Activated CD8-positive, alpha-beta T cell treated with anti-CD3 and anti-CD28 coated beads, Interleukin-2, amount 10 ng/mL, durations not matched to agents 7 days and 5 days (primary cell): ENCODE measurements at regions of chr4 and their contacts with region 1.

Region 1: GRCh38 chr4:87150498-87151261 is 69.7 kb downstream of the KLHL8 start:
- DNase-seq: peak; percentile 73
- ATAC-seq: peak; percentile 60
- H3K4me3 Mint-ChIP-seq: no peak overlapping the region
- H3K27ac Mint-ChIP-seq: no peak overlapping the region
- H3K4me1 Mint-ChIP-seq: no peaks in the 10 kb centered on the region
- H3K27me3 Mint-ChIP-seq: no peaks in the 10 kb centered on the region

Region 2: GRCh38 chr4:86927843-86928395 is 222.8 kb before region 1 on chr4:
- CTCF ChIA-PET with region 1: interaction called, 27 read pairs
- POLR2A ChIA-PET with region 1: no interaction called
- DNase-seq: no peak
- ATAC-seq: no peak
- H3K4me3 Mint-ChIP-seq: no peak overlapping the region
- H3K27ac Mint-ChIP-seq: no peak overlapping the region
- H3K4me1 Mint-ChIP-seq: peaks cover 3% of the 10 kb centered on the region
- H3K27me3 Mint-ChIP-seq: no peaks in the 10 kb centered on the region

Region 3: GRCh38 chr4:87166296-87166854 is 15.7 kb after region 1 on chr4:
- CTCF ChIA-PET with region 1: interaction called, 14 read pairs
- POLR2A ChIA-PET with region 1: no interaction called
- DNase-seq: no peak
- ATAC-seq: no peak
- H3K4me3 Mint-ChIP-seq: no peak overlapping the region
- H3K27ac Mint-ChIP-seq: no peak overlapping the region
- H3K4me1 Mint-ChIP-seq: no peaks in the 10 kb centered on the region
- H3K27me3 Mint-ChIP-seq: no peaks in the 10 kb centered on the region

Region 4: DNA sequence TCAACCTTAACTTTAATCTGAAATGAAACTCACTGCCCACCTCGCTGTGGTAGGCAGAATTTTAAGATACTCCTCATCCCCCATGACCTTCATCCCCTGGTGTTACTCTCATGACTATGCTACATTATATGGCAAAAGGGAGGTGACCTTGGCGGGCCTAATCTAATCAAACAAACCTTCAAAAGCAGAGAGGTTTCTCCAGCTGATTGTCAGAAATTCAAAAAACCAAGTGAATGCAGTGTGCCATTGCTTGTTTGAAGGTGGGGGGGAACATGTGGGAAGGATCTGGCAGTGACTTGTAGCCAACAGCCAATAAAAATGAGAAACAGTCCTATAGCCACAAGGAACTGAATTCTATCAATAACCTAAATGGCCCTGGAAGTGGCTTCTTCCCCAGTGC is 21.3 kb after region 1 on chr4:
- CTCF ChIA-PET with region 1: interaction called, 13 read pairs
- POLR2A ChIA-PET with region 1: no interaction called
- DNase-seq: no peak
- ATAC-seq: no peak
- H3K4me3 Mint-ChIP-seq: no peak overlapping the region
- H3K27ac Mint-ChIP-seq: no peak overlapping the region
- H3K4me1 Mint-ChIP-seq: no peaks in the 10 kb centered on the region
- H3K27me3 Mint-ChIP-seq: no peaks in the 10 kb centered on the region

Region 5: DNA sequence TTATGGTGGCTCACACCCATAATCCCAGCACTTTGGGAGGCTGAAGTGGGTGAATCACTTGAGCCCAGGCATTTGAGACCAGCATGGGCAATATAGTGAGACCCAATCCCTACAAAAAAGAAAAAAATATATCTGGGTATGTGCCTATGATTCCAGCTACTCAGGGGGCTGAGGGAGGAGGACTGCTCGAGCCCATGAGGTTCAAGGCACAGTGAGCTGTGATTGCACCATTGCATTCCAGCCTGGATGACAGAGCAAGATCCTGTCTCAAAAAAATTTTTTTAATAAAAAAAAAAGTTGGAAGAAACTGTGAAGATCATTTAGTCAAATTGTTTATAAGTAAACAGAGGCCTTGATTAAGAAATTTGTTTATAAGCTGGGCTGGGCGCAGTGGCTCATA is 30.1 kb after region 1 on chr4:
- CTCF ChIA-PET with region 1: interaction called, 10 read pairs
- POLR2A ChIA-PET with region 1: no interaction called
- DNase-seq: no peak
- ATAC-seq: no peak
- H3K4me3 Mint-ChIP-seq: no peak overlapping the region
- H3K27ac Mint-ChIP-seq: no peak overlapping the region
- H3K4me1 Mint-ChIP-seq: peaks cover 2% of the 10 kb centered on the region
- H3K27me3 Mint-ChIP-seq: no peaks in the 10 kb centered on the region

Region 6: GRCh38 chr4:87220094-87220822 is 69.6 kb after region 1 on chr4 and contains the start of gene KLHL8:
- CTCF ChIA-PET with region 1: interaction called, 26 read pairs
- POLR2A ChIA-PET with region 1: no interaction called
- DNase-seq: peak; percentile 88
- ATAC-seq: peak; percentile 93
- H3K4me3 Mint-ChIP-seq: peak within 1 kb of the TSS; percentile 94
- H3K27ac Mint-ChIP-seq: peak within 1 kb of the TSS; percentile 95
- H3K4me1 Mint-ChIP-seq: peaks cover 14% of the 10 kb centered on the region
- H3K27me3 Mint-ChIP-seq: peaks cover 9% of the 10 kb centered on the region
- total RNA-seq, gene KLHL8: 13.4 to 15.8 TPM

Region 7: DNA sequence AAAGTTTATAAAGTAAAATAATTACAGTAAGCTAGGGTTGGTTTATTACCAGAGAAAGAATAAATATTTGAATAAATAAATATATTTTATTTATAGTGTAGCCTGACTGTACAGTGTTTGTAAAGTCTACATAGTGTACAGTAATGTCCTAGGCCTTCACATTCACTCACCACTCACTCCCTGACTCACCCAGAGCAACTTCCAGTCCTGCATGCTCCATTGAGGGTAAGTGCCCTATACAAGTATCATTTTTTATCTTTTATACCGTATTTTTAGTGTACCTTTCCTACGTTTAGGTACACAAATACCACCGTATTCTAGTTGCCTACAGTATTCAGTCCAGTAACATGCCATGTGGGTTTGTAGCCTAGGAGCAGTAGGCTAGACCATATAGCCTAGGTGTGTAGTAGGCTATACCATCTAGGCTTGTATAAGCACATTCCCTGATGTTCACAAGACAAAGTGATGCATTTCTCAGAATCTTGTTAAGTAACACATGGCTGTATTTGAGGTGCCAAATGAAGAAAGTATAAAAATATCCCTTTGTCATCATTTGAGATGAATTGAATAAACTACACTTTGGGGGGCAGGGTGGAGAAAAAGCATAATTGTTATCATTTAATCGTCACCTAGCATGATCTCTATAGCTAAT is 84.5 kb after region 1 on chr4:
- CTCF ChIA-PET with region 1: interaction called, 41 read pairs
- POLR2A ChIA-PET with region 1: no interaction called
- DNase-seq: no peak
- ATAC-seq: no peak
- H3K4me3 Mint-ChIP-seq: peak overlapping the region; percentile 73
- H3K27ac Mint-ChIP-seq: no peak overlapping the region
- H3K4me1 Mint-ChIP-seq: peaks cover 6% of the 10 kb centered on the region
- H3K27me3 Mint-ChIP-seq: peaks cover 3% of the 10 kb centered on the region